GM10248 (cell line): ENCODE measurements at regions of chr2 and their contacts with region 1.

Region 1: GRCh38 chr2:204145263-204145751 is 208.7 kb downstream of the ICOS start:
- DNase-seq: peak; percentile 64
- CTCF ChIP-seq: peak; percentile 95

Region 2: GRCh38 chr2:204005940-204006721 is 139.2 kb before region 1 on chr2:
- CTCF ChIA-PET with region 1: no interaction called
- POLR2A ChIA-PET with region 1: no interaction called
- DNase-seq: no peak
- CTCF ChIP-seq: no peak

Region 3: DNA sequence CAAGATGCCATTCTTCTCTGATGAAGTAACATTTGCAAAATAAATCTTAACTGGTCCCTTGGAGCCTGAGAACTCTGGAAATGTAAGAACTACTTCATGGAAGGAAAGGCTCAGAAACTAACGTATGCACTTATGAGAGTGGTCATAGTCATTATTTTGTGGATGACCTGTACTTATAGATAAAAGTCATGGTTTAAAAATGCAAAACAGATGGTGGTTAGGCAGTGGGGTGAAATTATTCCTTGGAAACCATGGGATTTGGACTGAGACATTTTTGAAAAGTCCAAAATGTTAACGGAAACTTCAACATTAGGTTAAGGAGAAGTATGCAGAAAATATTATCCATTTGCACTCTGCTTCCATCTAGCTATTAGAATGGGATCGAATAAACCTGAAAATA is 14.2 kb after region 1 on chr2:
- CTCF ChIA-PET with region 1: interaction called, 12 read pairs
- POLR2A ChIA-PET with region 1: no interaction called
- DNase-seq: no peak
- CTCF ChIP-seq: no peak

Region 4: GRCh38 chr2:204195498-204195897 is 50.2 kb after region 1 on chr2:
- CTCF ChIA-PET with region 1: interaction called, 12 read pairs
- POLR2A ChIA-PET with region 1: no interaction called
- DNase-seq: no peak
- CTCF ChIP-seq: no peak

Region 5: DNA sequence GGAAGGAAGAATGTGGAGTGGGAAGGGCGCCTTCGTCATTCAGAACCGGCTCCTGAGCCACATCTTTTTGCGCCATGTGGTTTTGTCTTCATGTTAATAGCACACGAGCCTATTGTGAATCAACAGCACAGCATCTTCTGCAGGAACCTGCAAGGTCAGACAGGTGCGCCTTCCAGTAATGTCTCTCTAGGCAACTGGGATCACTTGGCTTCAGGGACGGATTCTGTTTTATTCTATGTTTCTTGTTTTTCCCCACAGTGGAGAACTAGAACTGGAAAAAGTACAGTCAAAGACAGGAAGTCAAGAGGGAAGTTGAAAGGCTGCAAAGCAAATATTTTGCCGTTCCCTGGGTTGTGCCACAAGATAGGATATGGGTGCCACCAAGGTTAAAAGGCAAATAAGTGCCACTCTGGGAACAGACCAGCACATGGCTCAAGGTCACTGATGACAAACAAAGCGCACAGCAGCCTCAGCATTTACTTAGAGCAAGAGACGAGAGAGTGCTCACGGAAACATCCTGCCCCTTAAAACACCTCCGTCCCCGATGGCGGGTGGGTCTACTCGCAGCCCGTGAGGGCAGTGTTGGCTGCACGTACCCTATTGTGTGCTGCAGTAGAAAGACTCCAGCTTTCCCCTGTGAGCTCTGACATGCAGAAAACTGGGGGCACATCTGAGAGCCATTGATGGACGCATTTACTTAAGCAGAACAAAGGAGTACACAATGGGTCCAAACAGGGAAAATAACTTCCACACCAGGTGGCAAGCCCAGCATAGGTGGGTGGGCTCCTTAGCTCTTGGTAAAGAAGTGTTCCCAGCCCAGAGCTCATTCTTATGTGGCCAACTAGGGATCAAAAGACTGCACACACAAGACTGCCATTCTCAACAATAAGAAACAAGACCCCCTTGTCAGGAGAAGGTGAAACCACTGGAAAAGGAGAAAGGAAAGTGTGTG is 292.8 kb after region 1 on chr2:
- CTCF ChIA-PET with region 1: no interaction called
- POLR2A ChIA-PET with region 1: no interaction called
- DNase-seq: no peak
- CTCF ChIP-seq: no peak